ENCODE measurements at regions of chr2 and their contacts with region 1.

Region 1: GRCh38 chr2:230007931-230008707 is 60.6 kb downstream of the SLC16A14 start:
- DNase-seq: peak; percentile 90
- H3K4me3 Mint-ChIP-seq: no peak overlapping the region
- H3K27ac Mint-ChIP-seq: no peak overlapping the region
- H3K4me1 Mint-ChIP-seq: peaks cover 5% of the 10 kb centered on the region
- H3K27me3 Mint-ChIP-seq: no peaks in the 10 kb centered on the region

Region 2: DNA sequence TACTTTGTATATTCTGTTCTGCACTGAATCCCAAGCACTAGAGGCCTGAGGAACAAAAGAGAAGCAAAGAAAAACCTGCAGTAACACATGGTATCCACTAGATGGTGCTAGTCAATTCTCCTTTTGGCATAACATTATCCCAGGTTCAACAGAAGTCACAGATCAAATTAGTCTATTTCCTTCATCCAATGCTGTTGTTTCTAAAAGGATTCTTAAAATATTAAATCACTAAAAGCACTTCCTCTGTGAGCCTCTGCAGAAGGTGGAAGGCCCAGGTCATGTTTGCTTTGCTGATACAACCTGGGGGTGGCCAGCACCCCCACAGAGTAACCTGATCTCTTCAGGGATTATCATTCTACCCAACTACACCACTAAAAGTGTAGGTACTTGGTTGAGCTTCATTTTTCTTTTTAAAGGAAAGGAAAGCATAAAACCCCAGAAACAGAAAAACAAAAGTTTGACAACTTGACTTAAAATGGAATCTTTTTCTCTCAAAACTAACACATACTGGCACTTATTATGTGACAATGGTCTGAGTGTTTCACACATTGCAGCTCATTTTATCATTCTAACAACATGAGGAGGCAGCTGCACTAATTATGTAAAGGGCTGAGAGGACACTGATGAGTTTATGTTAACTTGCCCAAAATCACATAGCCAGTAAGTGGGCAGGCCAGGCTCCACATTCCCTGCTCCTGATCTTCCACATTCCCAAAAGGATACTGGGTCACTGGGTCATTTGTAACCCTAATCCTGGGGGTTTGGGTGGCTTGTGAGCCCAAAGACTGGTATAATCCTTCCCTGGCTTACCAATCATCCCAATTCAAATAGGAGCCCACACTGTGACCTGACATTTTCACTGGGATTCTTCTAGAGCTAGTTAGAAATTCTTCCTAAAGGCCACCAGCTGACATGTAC is 227.0 kb before region 1 on chr2:
- CTCF ChIA-PET with region 1: no interaction called
- POLR2A ChIA-PET with region 1: no interaction called
- intact Hi-C with region 1: loop called (anchors 5 kb)
- DNase-seq: no peak
- H3K4me3 Mint-ChIP-seq: no peak overlapping the region
- H3K27ac Mint-ChIP-seq: peak overlapping the region; percentile 26
- H3K4me1 Mint-ChIP-seq: peaks cover 22% of the 10 kb centered on the region
- H3K27me3 Mint-ChIP-seq: no peaks in the 10 kb centered on the region

Region 3: DNA sequence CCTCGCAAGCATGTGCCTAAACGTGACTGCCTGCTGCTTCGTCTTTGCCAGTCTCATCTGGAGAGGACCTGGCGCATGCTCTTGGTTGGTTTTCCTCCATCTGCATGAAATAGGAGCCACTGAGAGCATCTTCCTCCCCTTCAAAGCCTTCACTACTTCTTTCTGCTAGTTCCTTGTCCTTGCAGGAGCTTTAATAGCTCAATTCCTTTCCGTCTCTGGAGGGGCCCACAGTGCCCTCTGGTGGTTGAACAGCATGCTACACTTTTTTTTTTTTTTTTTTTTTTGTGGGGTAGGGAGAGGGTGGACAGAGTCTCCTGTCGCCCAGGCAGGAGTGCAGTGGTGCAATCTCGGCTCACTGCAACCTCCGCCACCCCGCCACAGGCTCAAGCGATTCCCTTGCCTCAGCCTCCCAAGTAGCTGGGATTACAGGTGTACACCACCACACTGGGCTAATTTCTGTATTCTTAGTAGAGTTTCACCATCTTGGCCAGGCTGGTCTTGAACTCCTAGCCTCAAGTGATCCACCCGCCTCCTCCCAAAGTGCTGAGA is 152.1 kb after region 1 on chr2:
- CTCF ChIA-PET with region 1: interaction called, 69 read pairs
- POLR2A ChIA-PET with region 1: no interaction called
- intact Hi-C with region 1: loop called (anchors 1 kb)
- DNase-seq: peak; percentile 69
- H3K4me3 Mint-ChIP-seq: no peak overlapping the region
- H3K27ac Mint-ChIP-seq: no peak overlapping the region
- H3K4me1 Mint-ChIP-seq: peaks cover 7% of the 10 kb centered on the region
- H3K27me3 Mint-ChIP-seq: no peaks in the 10 kb centered on the region

Region 4: GRCh38 chr2:230614913-230615332 is 606.8 kb after region 1 on chr2:
- CTCF ChIA-PET with region 1: interaction called, 11 read pairs
- POLR2A ChIA-PET with region 1: no interaction called
- intact Hi-C with region 1: loop called (anchors 1 kb)
- DNase-seq: peak; percentile 78
- H3K4me3 Mint-ChIP-seq: no peak overlapping the region
- H3K27ac Mint-ChIP-seq: peak overlapping the region; percentile 56
- H3K4me1 Mint-ChIP-seq: peaks cover 22% of the 10 kb centered on the region
- H3K27me3 Mint-ChIP-seq: no peaks in the 10 kb centered on the region